ENCODE measurements at regions of chr19 and their contacts with region 1.

Region 1: GRCh38 chr19:29393915-29394460 is 131.8 kb upstream of the VSTM2B start:
- DNase-seq: no peak
- ATAC-seq: peak; percentile 74; the same call in 1 of the 2 replicates
- H3K4me3 ChIP-seq: no peak overlapping the region
- H3K27ac ChIP-seq: no peak overlapping the region
- H3K4me1 ChIP-seq: no peaks in the 10 kb centered on the region
- H3K27me3 ChIP-seq: no peaks in the 10 kb centered on the region
- CTCF ChIP-seq: no peak

Region 2: DNA sequence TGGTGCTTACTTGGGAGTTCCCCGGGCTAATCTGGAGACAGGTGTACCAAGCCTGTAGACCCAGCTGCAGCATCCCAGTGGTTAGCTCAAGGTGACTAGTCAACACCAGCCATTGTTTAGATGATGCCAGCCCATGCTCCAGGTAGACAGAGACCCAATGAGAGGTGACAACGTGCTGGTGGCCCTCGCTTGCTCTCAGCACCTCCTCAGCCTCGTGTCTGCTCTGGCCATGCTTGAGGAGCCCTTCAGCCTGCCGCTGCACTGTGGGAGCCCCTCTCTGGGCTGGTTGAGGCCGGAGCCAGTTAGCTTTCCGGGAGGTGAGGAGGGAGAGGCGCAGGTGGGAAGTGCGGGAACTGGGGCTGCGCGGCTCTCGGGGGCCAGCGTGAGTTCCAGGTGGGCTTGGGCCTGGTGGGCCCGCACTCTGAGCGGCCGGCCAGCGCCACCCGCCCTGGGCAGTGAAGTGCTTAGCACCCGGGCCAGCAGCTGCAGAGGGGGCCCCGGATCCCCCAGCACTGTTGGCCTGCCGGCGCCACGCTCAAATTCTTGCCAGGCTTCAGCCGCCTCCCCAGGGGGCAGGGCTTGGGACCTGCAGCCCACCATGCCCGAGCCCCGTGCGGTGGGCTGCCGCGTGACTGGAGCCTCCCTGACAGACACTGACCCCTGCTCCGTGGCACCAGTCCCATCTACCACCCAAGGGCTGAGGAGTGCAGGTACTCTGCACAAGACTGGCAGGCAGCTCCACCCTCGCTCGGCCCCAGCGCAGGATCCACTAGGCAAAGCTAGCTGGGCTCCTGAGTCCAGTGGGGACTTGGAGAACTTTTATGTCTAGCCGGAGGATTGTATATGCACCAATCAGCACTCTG is 45.9 kb after region 1 on chr19:
- CTCF ChIA-PET with region 1: interaction called, 14 read pairs
- POLR2A ChIA-PET with region 1: no interaction called
- in situ Hi-C with region 1: no loop called
- intact Hi-C with region 1: no loop called
- DNase-seq: no peak
- ATAC-seq: no peak
- H3K4me3 ChIP-seq: no peak overlapping the region
- H3K27ac ChIP-seq: no peak overlapping the region
- H3K4me1 ChIP-seq: no peaks in the 10 kb centered on the region
- H3K27me3 ChIP-seq: peaks cover 3% of the 10 kb centered on the region; the same call in 1 of the 2 replicates
- CTCF ChIP-seq: no peak